ENCODE measurements at regions of chr12 and their contacts with region 1.

Region 1: GRCh38 chr12:48814262-48815125 is 3.8 kb upstream of the CACNB3 start:
- DNase-seq: peak; percentile 31
- H3K4me3 ChIP-seq: peak overlapping the region; percentile 74
- H3K27me3 ChIP-seq: no peaks in the 10 kb centered on the region
- CTCF ChIP-seq: peak; percentile 82

Region 2: DNA sequence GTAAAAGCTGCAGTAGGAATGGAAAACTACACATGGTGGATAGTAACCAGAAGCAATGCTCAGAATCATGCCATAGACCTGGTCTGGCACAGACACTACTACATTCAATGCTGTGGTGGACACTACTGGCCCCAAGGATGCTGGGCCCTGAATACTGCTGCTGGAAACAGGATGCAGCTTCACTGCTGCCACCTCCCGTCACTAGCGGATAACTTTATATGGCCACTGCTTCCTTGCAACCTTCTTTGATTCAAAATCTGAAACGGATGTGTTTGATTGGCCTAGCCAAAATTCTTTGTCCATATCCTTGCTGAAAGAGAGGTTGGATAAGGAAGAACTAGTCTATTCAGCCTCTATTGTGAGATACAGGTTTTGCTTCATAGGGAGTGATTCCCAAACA is 56.3 kb before region 1 on chr12:
- CTCF ChIA-PET with region 1: interaction called, 28 read pairs
- POLR2A ChIA-PET with region 1: no interaction called
- DNase-seq: no peak
- H3K4me3 ChIP-seq: no peak overlapping the region
- H3K27me3 ChIP-seq: no peaks in the 10 kb centered on the region; the same call in 1 of the 2 replicates
- CTCF ChIP-seq: peak; percentile 10; the same call in 1 of the 2 replicates

Region 3: GRCh38 chr12:48826209-48826894 is 11.9 kb after region 1 on chr12:
- CTCF ChIA-PET with region 1: interaction called, 18 read pairs
- POLR2A ChIA-PET with region 1: no interaction called
- DNase-seq: no peak
- H3K4me3 ChIP-seq: no peak overlapping the region
- H3K27me3 ChIP-seq: no peaks in the 10 kb centered on the region
- CTCF ChIP-seq: no peak